Activated CD4-positive, alpha-beta T cell treated with anti-CD3 and anti-CD28 coated beads for 36 hours (primary cell): ENCODE measurements at regions of chr20 and their contacts with region 1.

Region 1: GRCh38 chr20:50338479-50339391 is 148.1 kb downstream of the CEBPB start:
- DNase-seq: peak; percentile 92
- ATAC-seq: peak; percentile 74
- H3K4me3 Mint-ChIP-seq: peak overlapping the region; percentile 55
- H3K27ac Mint-ChIP-seq: peak overlapping the region; percentile 97
- H3K4me1 Mint-ChIP-seq: peaks cover 61% of the 10 kb centered on the region
- H3K27me3 Mint-ChIP-seq: no peaks in the 10 kb centered on the region

Region 2: GRCh38 chr20:49594143-49594930 is 744.4 kb before region 1 on chr20:
- CTCF ChIA-PET with region 1: no interaction called
- POLR2A ChIA-PET with region 1: no interaction called
- intact Hi-C with region 1: loop called in 1 of 2 experiments (anchors 5 kb)
- DNase-seq: peak; percentile 87
- ATAC-seq: peak; percentile 62
- H3K4me3 Mint-ChIP-seq: peak overlapping the region; percentile 76
- H3K27ac Mint-ChIP-seq: peak overlapping the region; percentile 96
- H3K4me1 Mint-ChIP-seq: peaks cover 77% of the 10 kb centered on the region
- H3K27me3 Mint-ChIP-seq: peaks cover 3% of the 10 kb centered on the region

Region 3: GRCh38 chr20:49762940-49763766 is 575.6 kb before region 1 on chr20:
- CTCF ChIA-PET with region 1: no interaction called
- POLR2A ChIA-PET with region 1: no interaction called
- intact Hi-C with region 1: no loop called
- DNase-seq: no peak
- ATAC-seq: no peak
- H3K4me3 Mint-ChIP-seq: no peak overlapping the region
- H3K27ac Mint-ChIP-seq: no peak overlapping the region
- H3K4me1 Mint-ChIP-seq: peaks cover 6% of the 10 kb centered on the region
- H3K27me3 Mint-ChIP-seq: peaks cover 39% of the 10 kb centered on the region

Region 4: GRCh38 chr20:50286609-50287008 is 52.1 kb before region 1 on chr20:
- CTCF ChIA-PET with region 1: interaction called, 6 read pairs
- POLR2A ChIA-PET with region 1: no interaction called
- intact Hi-C with region 1: loop called (anchors 1 to 2 kb)
- DNase-seq: peak; percentile 33
- ATAC-seq: peak; percentile 8
- H3K4me3 Mint-ChIP-seq: no peak overlapping the region
- H3K27ac Mint-ChIP-seq: no peak overlapping the region
- H3K4me1 Mint-ChIP-seq: peaks cover 22% of the 10 kb centered on the region
- H3K27me3 Mint-ChIP-seq: peaks cover 2% of the 10 kb centered on the region

Region 5: GRCh38 chr20:50439539-50440453 is 101.1 kb after region 1 on chr20:
- CTCF ChIA-PET with region 1: no interaction called
- POLR2A ChIA-PET with region 1: interaction called, 3 read pairs
- intact Hi-C with region 1: loop called in 1 of 2 experiments (anchors 1 kb)
- DNase-seq: no peak
- ATAC-seq: no peak
- H3K4me3 Mint-ChIP-seq: no peak overlapping the region
- H3K27ac Mint-ChIP-seq: peak overlapping the region; percentile 64
- H3K4me1 Mint-ChIP-seq: peaks cover 28% of the 10 kb centered on the region
- H3K27me3 Mint-ChIP-seq: peaks cover 2% of the 10 kb centered on the region

Region 6: GRCh38 chr20:50516180-50516934 is 177.6 kb after region 1 on chr20:
- CTCF ChIA-PET with region 1: no interaction called
- POLR2A ChIA-PET with region 1: no interaction called
- intact Hi-C with region 1: loop called in 1 of 2 experiments (anchors 2 kb)
- DNase-seq: no peak
- ATAC-seq: peak; percentile 11
- H3K4me3 Mint-ChIP-seq: peak overlapping the region; percentile 99
- H3K27ac Mint-ChIP-seq: peak overlapping the region; percentile 99
- H3K4me1 Mint-ChIP-seq: peaks cover 93% of the 10 kb centered on the region
- H3K27me3 Mint-ChIP-seq: no peaks in the 10 kb centered on the region

Region 7: GRCh38 chr20:50569864-50570836 is 231.4 kb after region 1 on chr20:
- CTCF ChIA-PET with region 1: no interaction called
- POLR2A ChIA-PET with region 1: no interaction called
- intact Hi-C with region 1: loop called (anchors 1 to 10 kb)
- DNase-seq: peak; percentile 77
- ATAC-seq: peak; percentile 92
- H3K4me3 Mint-ChIP-seq: no peak overlapping the region
- H3K27ac Mint-ChIP-seq: peak overlapping the region; percentile 77
- H3K4me1 Mint-ChIP-seq: peaks cover 82% of the 10 kb centered on the region
- H3K27me3 Mint-ChIP-seq: no peaks in the 10 kb centered on the region

Region 8: DNA sequence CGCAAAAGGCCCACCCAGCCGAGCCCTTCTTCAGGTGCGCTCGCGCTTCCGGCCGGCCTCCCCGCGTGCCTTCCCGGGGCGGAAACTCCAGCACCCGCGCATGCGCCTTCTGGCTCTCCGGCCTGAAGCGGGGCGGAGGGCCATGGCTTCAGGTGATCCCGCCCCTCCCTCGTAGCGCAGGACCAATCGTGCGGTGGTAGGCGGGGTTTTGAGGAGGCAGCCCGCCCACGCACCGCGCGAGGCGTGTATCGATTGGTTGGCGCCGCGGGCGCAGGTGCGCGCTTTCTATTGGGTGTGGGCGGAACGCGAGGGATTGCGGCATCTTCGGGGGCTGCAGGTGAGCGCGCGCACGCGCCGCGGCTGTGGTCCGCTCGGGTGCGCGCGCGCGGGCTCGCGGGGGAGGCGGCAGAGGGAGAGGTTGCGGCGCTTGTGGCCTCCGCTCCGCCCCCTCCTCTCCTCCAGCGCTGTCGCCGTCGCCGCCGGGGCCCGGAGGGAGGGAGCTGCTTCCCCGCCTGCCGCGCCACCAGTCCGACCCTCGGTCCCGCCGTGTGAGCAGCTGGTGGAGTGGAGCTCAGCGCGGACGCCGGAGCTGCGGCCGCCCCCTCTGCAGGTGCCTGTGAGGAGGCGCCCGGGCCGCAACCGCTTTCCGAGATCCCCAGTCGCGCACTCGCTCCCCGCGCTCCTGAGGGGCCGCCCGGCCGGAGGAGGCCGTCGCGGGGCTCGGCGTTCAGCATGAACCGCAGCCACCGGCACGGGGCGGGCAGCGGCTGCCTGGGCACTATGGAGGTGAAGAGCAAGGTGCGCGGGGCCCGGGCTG is 392.5 kb after region 1 on chr20 and contains the start of gene PARD6B:
- CTCF ChIA-PET with region 1: no interaction called
- POLR2A ChIA-PET with region 1: no interaction called
- intact Hi-C with region 1: loop called in 1 of 2 experiments (anchors 2 kb)
- DNase-seq: peak; percentile 100
- ATAC-seq: peak; percentile 92
- H3K4me3 Mint-ChIP-seq: peak within 1 kb of the TSS; percentile 85
- H3K27ac Mint-ChIP-seq: peak within 1 kb of the TSS; percentile 78
- H3K4me1 Mint-ChIP-seq: peaks cover 46% of the 10 kb centered on the region
- H3K27me3 Mint-ChIP-seq: no peaks in the 10 kb centered on the region
- total RNA-seq, gene PARD6B: 4.9 to 6.2 TPM